ENCODE measurements at regions of chr5 and their contacts with region 1.

Region 1: GRCh38 chr5:132001647-132002561 is 9.6 kb downstream of the ACSL6 start:
- DNase-seq: no peak
- ATAC-seq: no peak
- H3K4me3 ChIP-seq: no peak overlapping the region
- H3K4me3 Mint-ChIP-seq: peak overlapping the region in 8 of 10 donors; percentile 12 to 72 (median 58)
- H3K27ac ChIP-seq: no peak overlapping the region
- H3K27ac Mint-ChIP-seq: peak overlapping the region in 3 of 9 donors; percentile 26 to 73 (median 36)
- H3K4me1 ChIP-seq: peaks cover 43 to 49% of the 10 kb centered on the region in 2 donors
- H3K4me1 Mint-ChIP-seq: peaks cover 38 to 63% (median 51%) of the 10 kb centered on the region in 7 donors
- H3K27me3 ChIP-seq: no peaks in the 10 kb centered on the region
- H3K27me3 Mint-ChIP-seq: peaks cover 0 to 13% (median 0%) of the 10 kb centered on the region in 5 donors

Region 2: GRCh38 chr5:131959906-131960305 is 42.0 kb before region 1 on chr5:
- CTCF ChIA-PET with region 1: interaction called, 3 read pairs
- POLR2A ChIA-PET with region 1: no interaction called
- intact Hi-C with region 1: loop called in 1 of 2 experiments (anchors 5 kb)
- DNase-seq: no peak
- ATAC-seq: no peak
- H3K4me3 ChIP-seq: no peak overlapping the region
- H3K4me3 Mint-ChIP-seq: no peak overlapping the region
- H3K27ac ChIP-seq: no peak overlapping the region
- H3K27ac Mint-ChIP-seq: no peak overlapping the region
- H3K4me1 ChIP-seq: no peaks in the 10 kb centered on the region
- H3K4me1 Mint-ChIP-seq: peaks cover 0 to 6% (median 0%) of the 10 kb centered on the region in 7 donors
- H3K27me3 ChIP-seq: no peaks in the 10 kb centered on the region
- H3K27me3 Mint-ChIP-seq: peaks cover 0 to 2% (median 0%) of the 10 kb centered on the region in 5 donors

Region 3: GRCh38 chr5:131974956-131975726 is 26.8 kb before region 1 on chr5:
- CTCF ChIA-PET with region 1: no interaction called
- POLR2A ChIA-PET with region 1: interaction called, 3 read pairs
- intact Hi-C with region 1: loop called (anchors 1 to 2 kb)
- DNase-seq: peak in 7 of 9 donors; percentile 23 to 76 (median 65)
- ATAC-seq: peak; percentile 74
- H3K4me3 ChIP-seq: peak overlapping the region; percentile 61
- H3K4me3 Mint-ChIP-seq: peak overlapping the region; percentile 79 to 97 (median 84)
- H3K27ac ChIP-seq: peak overlapping the region; percentile 76
- H3K27ac Mint-ChIP-seq: peak overlapping the region; percentile 90 to 99 (median 95)
- H3K4me1 ChIP-seq: peaks cover 34 to 46% of the 10 kb centered on the region in 2 donors
- H3K4me1 Mint-ChIP-seq: peaks cover 34 to 85% (median 75%) of the 10 kb centered on the region in 7 donors
- H3K27me3 ChIP-seq: no peaks in the 10 kb centered on the region
- H3K27me3 Mint-ChIP-seq: peaks cover 0 to 7% (median 0%) of the 10 kb centered on the region in 5 donors